ENCODE measurements at regions of chr6 and their contacts with region 1.

Region 1: GRCh38 chr6:72140795-72141194 is 254.4 kb downstream of the RIMS1 start:
- DNase-seq: peak in 1 of 2 experiments; percentile 1
- H3K4me3 ChIP-seq: no peak overlapping the region
- H3K4me3 Mint-ChIP-seq: no peak overlapping the region
- H3K27ac Mint-ChIP-seq: no peak overlapping the region
- H3K4me1 ChIP-seq: no peaks in the 10 kb centered on the region
- H3K4me1 Mint-ChIP-seq: no peaks in the 10 kb centered on the region
- H3K27me3 ChIP-seq: no peaks in the 10 kb centered on the region
- H3K27me3 Mint-ChIP-seq: no peaks in the 10 kb centered on the region
- CTCF ChIP-seq: no peak

Region 2: GRCh38 chr6:71822626-71823025 is 318.2 kb before region 1 on chr6:
- CTCF ChIA-PET with region 1: no interaction called
- POLR2A ChIA-PET with region 1: no interaction called
- intact Hi-C with region 1: no loop called
- DNase-seq: no peak
- H3K4me3 ChIP-seq: no peak overlapping the region
- H3K4me3 Mint-ChIP-seq: no peak overlapping the region
- H3K27ac Mint-ChIP-seq: no peak overlapping the region
- H3K4me1 ChIP-seq: no peaks in the 10 kb centered on the region
- H3K4me1 Mint-ChIP-seq: no peaks in the 10 kb centered on the region
- H3K27me3 ChIP-seq: no peaks in the 10 kb centered on the region
- H3K27me3 Mint-ChIP-seq: no peaks in the 10 kb centered on the region
- CTCF ChIP-seq: no peak

Region 3: GRCh38 chr6:72219536-72219935 is 78.7 kb after region 1 on chr6:
- CTCF ChIA-PET with region 1: no interaction called
- POLR2A ChIA-PET with region 1: interaction called, 11 read pairs
- intact Hi-C with region 1: no loop called
- DNase-seq: no peak
- H3K4me3 ChIP-seq: no peak overlapping the region
- H3K4me3 Mint-ChIP-seq: no peak overlapping the region
- H3K27ac Mint-ChIP-seq: no peak overlapping the region
- H3K4me1 ChIP-seq: peaks cover 9% of the 10 kb centered on the region; the same call in 1 of the 2 replicates
- H3K4me1 Mint-ChIP-seq: no peaks in the 10 kb centered on the region
- H3K27me3 ChIP-seq: no peaks in the 10 kb centered on the region
- H3K27me3 Mint-ChIP-seq: no peaks in the 10 kb centered on the region
- CTCF ChIP-seq: no peak

Region 4: GRCh38 chr6:72246926-72247325 is 106.1 kb after region 1 on chr6:
- CTCF ChIA-PET with region 1: no interaction called
- POLR2A ChIA-PET with region 1: no interaction called
- intact Hi-C with region 1: loop called (anchors 1 kb)
- DNase-seq: peak in 1 of 2 experiments; percentile 9
- H3K4me3 ChIP-seq: no peak overlapping the region
- H3K4me3 Mint-ChIP-seq: no peak overlapping the region
- H3K27ac Mint-ChIP-seq: no peak overlapping the region
- H3K4me1 ChIP-seq: no peaks in the 10 kb centered on the region
- H3K4me1 Mint-ChIP-seq: no peaks in the 10 kb centered on the region
- H3K27me3 ChIP-seq: no peaks in the 10 kb centered on the region
- H3K27me3 Mint-ChIP-seq: no peaks in the 10 kb centered on the region
- CTCF ChIP-seq: peak; percentile 12 to 24

Measured in Caco-2 (cell line).